ENCODE measurements at regions of chr1 and their contacts with region 1.

Region 1: DNA sequence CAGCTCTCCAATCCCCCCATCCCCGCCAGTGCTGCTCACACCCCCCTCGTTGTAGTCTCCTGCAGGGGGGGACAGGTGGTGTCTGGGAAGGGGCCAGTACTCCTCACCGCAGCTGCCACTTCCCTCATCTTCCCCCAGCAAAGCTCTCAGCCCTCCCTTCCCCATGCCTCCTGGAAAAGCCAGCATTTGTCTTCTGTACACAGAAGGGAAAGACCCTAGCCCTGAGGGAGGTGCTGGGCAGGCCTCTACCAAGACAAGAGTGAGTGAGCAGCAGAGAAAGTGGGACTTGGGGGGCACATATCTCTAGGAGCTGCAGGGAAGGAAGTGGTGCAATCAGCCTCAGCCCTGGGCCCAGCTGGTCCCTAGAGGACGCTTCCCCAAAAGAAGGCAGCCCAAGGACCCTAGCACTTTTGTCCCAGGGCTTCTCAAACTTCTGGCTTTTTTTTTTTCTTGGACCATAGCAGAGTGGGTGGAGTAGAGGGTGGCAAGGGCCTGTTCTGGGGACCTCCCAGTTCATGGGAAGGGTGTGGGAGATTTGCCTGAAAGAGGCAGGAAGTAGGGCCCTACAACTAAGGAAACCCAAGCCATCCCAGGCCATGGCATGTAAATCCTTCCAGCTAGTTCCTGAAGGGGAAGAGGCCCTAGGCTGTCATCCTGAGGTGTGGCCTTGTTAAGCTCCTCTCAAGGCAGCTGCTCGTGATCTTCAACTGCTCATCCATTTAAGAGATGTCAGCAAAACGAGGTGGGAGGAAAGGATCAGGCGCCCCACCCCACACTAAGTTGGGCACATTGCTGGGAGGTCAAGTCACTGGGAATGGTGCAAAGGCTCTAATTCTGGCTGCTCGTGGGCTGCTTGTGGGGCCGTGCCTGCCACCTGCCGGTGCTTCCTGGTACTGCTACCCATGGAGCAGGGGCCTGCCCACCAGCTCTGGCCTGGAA is 12.6 kb downstream of the ZC3H12A start:
- DNase-seq: peak; percentile 84
- H3K4me3 Mint-ChIP-seq: no peak overlapping the region
- H3K27ac Mint-ChIP-seq: peak overlapping the region; percentile 72
- H3K4me1 Mint-ChIP-seq: peaks cover 19% of the 10 kb centered on the region
- H3K27me3 Mint-ChIP-seq: no peaks in the 10 kb centered on the region

Region 2: GRCh38 chr1:36605942-36606640 is 880.9 kb before region 1 on chr1:
- CTCF ChIA-PET with region 1: no interaction called
- POLR2A ChIA-PET with region 1: no interaction called
- intact Hi-C with region 1: no loop called
- DNase-seq: no peak
- H3K4me3 Mint-ChIP-seq: no peak overlapping the region
- H3K27ac Mint-ChIP-seq: no peak overlapping the region
- H3K4me1 Mint-ChIP-seq: peaks cover 22% of the 10 kb centered on the region
- H3K27me3 Mint-ChIP-seq: no peaks in the 10 kb centered on the region

Region 3: DNA sequence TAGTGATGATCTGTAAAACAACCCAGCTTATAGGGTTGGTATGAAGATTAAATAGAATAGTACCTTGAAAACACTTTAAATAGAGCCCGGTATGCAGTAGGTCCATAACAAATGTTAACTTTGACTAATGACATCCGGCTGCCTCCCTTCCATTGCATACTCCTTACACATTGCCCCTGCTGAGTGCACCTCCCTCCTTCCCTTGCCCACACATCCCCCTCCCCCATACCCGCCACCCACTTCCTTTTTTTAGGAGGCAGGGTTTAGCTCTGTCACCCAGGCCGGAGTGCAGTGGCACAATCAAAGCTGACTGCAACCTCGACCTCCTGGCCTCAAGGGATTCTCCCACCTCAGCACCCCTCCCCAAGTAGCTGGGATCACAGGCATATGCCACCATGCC is 37.0 kb before region 1 on chr1:
- CTCF ChIA-PET with region 1: interaction called, 241 read pairs
- POLR2A ChIA-PET with region 1: interaction called, 4 read pairs
- intact Hi-C with region 1: loop called (anchors 1 kb)
- DNase-seq: peak; percentile 58
- H3K4me3 Mint-ChIP-seq: no peak overlapping the region
- H3K27ac Mint-ChIP-seq: peak overlapping the region; percentile 18
- H3K4me1 Mint-ChIP-seq: peaks cover 8% of the 10 kb centered on the region
- H3K27me3 Mint-ChIP-seq: peaks cover 9% of the 10 kb centered on the region

Region 4: DNA sequence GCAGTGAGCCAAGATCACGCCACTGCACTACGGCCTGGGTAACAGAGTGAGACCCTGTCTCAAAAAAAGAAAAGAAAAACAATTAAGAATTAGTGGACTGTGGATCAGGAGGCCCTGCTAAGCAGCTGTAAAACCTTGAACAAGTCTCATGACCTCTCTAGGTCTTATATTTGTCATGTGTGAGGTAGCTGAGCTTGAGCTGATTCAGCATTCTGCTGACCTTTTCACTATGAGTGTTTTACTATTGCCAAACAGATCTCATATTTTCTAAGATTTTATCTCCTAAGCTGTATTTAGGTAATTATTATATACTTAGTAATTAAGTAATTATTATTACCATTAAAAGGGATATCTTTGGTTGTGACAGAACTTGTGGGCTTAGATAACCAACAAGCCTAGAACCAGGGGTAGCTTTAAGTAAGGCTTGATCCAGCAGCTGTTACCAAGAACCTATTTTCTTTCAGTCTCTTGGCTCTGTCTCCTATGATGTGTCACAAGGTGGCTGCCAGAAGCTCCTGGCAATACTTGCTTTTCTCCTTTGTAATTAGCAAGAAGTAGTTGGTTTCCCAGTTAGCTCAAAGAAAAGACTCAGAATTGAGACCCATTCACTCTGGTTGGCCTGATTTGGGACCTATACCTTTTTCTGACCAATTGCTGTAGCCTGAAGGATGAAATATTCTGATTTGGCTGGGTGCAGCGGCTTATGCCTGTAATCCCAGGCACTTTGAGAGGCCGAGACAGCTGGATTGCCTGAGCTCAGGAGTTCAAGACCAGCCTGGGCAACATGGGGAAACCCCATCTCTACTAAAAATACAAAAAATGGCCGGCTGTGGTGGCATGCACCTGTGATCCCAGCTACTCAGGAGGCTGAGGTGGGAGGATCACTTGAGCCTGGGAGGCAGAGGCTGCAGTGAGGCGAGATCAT is 21.1 kb before region 1 on chr1:
- CTCF ChIA-PET with region 1: interaction called, 157 read pairs
- POLR2A ChIA-PET with region 1: no interaction called
- intact Hi-C with region 1: no loop called
- DNase-seq: no peak
- H3K4me3 Mint-ChIP-seq: no peak overlapping the region
- H3K27ac Mint-ChIP-seq: no peak overlapping the region
- H3K4me1 Mint-ChIP-seq: peaks cover 10% of the 10 kb centered on the region
- H3K27me3 Mint-ChIP-seq: no peaks in the 10 kb centered on the region

Region 5: DNA sequence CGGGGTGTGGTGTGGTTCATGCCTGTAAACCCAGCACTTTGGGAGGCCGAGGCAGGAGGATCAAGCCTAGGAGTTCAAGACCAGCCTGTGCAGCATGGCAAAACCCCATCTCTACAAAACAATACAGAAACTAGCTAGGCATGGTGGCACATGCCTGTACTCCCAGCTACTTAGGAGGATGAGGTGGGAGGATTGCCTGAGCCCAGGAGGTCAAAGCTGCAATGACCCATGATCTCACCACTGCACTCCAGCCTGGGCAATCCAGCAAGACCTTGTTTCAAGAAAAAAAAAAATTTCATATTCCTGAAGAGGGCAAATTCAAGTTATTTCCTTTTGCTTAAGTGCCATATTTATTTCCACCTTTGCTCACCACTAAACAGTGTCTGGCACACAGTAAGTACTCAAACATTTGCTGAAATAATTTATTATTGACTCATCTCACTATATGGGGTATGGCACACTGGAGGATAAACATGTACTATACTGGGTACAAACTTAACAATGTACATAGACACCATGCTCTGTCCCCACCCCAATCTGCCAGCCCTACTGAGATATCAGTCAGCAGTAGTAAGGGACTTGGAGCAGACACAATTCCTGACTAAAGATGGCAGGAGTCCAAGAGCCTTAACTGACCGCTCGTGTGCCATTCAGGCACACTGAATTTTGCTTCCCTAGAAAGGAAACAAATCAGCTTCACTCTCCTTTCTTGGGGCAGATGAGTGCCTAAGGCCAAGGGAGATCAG is 12.1 kb after region 1 on chr1:
- CTCF ChIA-PET with region 1: interaction called, 75 read pairs
- POLR2A ChIA-PET with region 1: interaction called, 4 read pairs
- intact Hi-C with region 1: no loop called
- DNase-seq: no peak
- H3K4me3 Mint-ChIP-seq: no peak overlapping the region
- H3K27ac Mint-ChIP-seq: no peak overlapping the region
- H3K4me1 Mint-ChIP-seq: peaks cover 19% of the 10 kb centered on the region
- H3K27me3 Mint-ChIP-seq: no peaks in the 10 kb centered on the region

Region 6: GRCh38 chr1:37514350-37515184 is 27.6 kb after region 1 on chr1 and contains the start of gene MEAF6:
- CTCF ChIA-PET with region 1: interaction called, 50 read pairs
- POLR2A ChIA-PET with region 1: interaction called, 9 read pairs
- intact Hi-C with region 1: no loop called
- DNase-seq: peak; percentile 87
- H3K4me3 Mint-ChIP-seq: peak within 1 kb of the TSS; percentile 98
- H3K27ac Mint-ChIP-seq: peak within 1 kb of the TSS; percentile 94
- H3K4me1 Mint-ChIP-seq: peaks cover 49% of the 10 kb centered on the region
- H3K27me3 Mint-ChIP-seq: no peaks in the 10 kb centered on the region
- total RNA-seq, gene MEAF6: 89.6 to 89.7 TPM

Region 7: DNA sequence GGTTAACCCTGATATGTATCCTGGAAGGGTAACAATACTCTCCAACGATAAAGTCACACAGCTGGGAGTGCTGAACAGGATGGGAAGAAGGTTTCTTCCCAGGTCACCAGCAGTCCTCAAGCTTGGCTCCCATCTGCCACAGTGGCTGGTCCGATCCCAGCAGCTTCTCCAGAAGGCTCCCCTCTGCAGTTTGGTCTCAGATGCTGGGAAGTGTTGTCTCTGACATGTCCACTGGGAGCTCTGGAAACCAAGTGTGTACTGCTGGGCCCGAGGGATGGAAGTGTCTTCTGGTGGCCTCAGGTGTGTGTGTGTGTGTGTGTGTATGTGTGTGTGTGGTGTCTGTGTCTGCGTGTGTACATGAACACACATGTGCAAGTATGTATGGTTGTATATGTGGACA is 125.3 kb after region 1 on chr1:
- CTCF ChIA-PET with region 1: no interaction called
- POLR2A ChIA-PET with region 1: no interaction called
- intact Hi-C with region 1: no loop called
- DNase-seq: no peak
- H3K4me3 Mint-ChIP-seq: no peak overlapping the region
- H3K27ac Mint-ChIP-seq: no peak overlapping the region
- H3K4me1 Mint-ChIP-seq: no peaks in the 10 kb centered on the region
- H3K27me3 Mint-ChIP-seq: peaks cover 20% of the 10 kb centered on the region

Region 8: GRCh38 chr1:37682334-37682987 is 195.5 kb after region 1 on chr1:
- CTCF ChIA-PET with region 1: interaction called, 16 read pairs
- POLR2A ChIA-PET with region 1: no interaction called
- intact Hi-C with region 1: no loop called
- DNase-seq: peak; percentile 84
- H3K4me3 Mint-ChIP-seq: no peak overlapping the region
- H3K27ac Mint-ChIP-seq: no peak overlapping the region
- H3K4me1 Mint-ChIP-seq: peaks cover 2% of the 10 kb centered on the region
- H3K27me3 Mint-ChIP-seq: no peaks in the 10 kb centered on the region

Region 9: GRCh38 chr1:38037221-38037939 is 550.4 kb after region 1 on chr1:
- CTCF ChIA-PET with region 1: no interaction called
- POLR2A ChIA-PET with region 1: no interaction called
- intact Hi-C with region 1: no loop called
- DNase-seq: peak; percentile 28
- H3K4me3 Mint-ChIP-seq: no peak overlapping the region
- H3K27ac Mint-ChIP-seq: no peak overlapping the region
- H3K4me1 Mint-ChIP-seq: no peaks in the 10 kb centered on the region
- H3K27me3 Mint-ChIP-seq: peaks cover 26% of the 10 kb centered on the region

Region 10: DNA sequence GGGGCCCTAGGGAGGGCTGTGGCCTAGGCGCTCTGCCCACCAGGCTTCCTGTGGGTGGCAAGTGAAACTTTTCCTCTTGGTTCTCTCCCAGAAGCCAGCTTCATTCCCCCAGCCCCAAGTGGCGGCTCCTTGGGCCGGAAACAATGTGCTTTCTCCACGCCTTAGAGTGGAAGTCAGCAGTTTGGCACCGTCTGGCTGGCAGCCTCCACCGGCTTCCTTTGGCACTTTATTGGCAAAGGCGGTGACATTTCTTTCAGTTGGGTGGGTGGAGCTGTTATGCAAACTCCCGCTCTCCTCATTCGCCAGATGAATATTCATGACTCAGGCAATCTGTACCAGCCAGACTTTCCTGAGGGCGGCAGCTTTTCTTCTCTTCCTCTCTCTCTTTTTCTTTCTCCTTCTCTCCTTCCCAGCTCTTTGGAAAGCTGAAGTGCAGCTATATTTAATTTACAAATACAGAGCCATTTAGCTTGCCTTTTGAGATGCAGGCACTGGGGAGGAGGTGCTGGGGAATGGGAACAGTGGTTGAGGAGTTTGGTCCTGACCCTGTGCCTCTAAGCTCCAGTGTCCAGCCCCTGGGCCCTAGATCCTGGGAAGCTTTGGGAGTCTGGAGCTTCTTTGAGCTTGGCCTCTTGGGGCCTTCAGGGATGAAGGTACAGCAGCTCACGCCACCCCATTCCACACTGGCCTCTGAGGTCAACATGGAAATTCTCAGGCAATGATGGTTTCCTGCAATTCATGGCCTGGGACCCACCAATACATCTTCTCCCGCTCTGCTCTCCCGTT is 627.5 kb after region 1 on chr1:
- CTCF ChIA-PET with region 1: no interaction called
- POLR2A ChIA-PET with region 1: no interaction called
- intact Hi-C with region 1: no loop called
- DNase-seq: peak; percentile 12
- H3K4me3 Mint-ChIP-seq: no peak overlapping the region
- H3K27ac Mint-ChIP-seq: no peak overlapping the region
- H3K4me1 Mint-ChIP-seq: no peaks in the 10 kb centered on the region
- H3K27me3 Mint-ChIP-seq: peaks cover 2% of the 10 kb centered on the region

Measured in activated CD4-positive, alpha-beta memory T cell treated with anti-CD3 and anti-CD28 coated beads for 36 hours (primary cell).